ENCODE measurements at regions of chr15 and their contacts with region 1.

Region 1: DNA sequence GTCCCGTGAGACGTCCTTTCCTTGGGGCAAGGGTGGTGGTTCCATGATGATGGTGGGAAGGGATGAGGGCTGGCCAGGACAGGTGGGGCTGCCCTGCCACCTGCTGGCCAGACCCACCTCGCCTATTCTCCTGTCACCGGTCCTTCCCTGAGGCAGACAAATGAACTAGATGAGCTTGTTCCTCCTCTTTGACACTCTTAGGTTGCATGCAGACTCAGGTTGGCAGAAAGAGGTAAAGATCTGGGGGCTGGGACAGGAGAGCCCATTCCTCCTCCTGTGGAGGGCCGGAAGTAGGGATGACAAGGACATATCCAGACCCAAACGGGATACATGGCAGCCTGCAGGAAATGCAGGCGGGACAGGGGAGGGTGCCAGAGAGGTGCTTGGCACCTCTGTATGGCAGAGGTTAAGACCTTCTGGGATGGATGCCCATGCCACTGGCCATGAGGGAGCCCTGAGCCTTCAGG is 38.6 kb downstream of the ACSBG1 start:
- DNase-seq: peak in 1 of 2 donors; percentile 47
- H3K4me3 ChIP-seq: no peak overlapping the region
- H3K27ac ChIP-seq: no peak overlapping the region
- H3K4me1 ChIP-seq: no peaks in the 10 kb centered on the region
- H3K27me3 ChIP-seq: no peaks in the 10 kb centered on the region
- CTCF ChIP-seq: peak; percentile 42 to 81 (median 71)
- POLR2A ChIP-seq: no peak

Region 2: DNA sequence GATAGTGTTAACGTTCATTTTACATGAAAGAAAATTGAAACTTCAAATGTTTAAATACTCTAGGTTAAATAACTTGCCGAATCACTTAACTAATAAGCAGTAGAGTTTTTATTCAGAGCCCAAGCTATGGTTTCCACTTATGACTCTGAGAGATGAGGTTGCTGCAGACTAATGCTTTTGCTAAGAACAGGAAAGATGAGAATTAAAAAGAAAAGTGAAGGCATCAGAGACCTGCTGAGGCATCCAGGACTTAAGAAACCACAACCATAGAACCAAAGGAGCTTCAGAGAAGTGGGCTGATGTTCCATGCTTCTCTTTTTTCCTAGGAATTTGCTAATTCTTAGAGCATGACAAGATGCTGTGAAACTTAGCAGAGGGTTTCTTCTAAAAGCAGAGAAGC is 765.6 kb before region 1 on chr15:
- intact Hi-C with region 1: no loop called
- DNase-seq: no peak
- H3K4me3 ChIP-seq: no peak overlapping the region
- H3K27ac ChIP-seq: no peak overlapping the region
- H3K4me1 ChIP-seq: no peaks in the 10 kb centered on the region
- H3K27me3 ChIP-seq: no peaks in the 10 kb centered on the region
- CTCF ChIP-seq: no peak
- POLR2A ChIP-seq: no peak

Region 3: GRCh38 chr15:78149068-78149804 is 46.5 kb before region 1 on chr15 and contains the start of gene IDH3A:
- intact Hi-C with region 1: loop called (anchors 2 kb)
- DNase-seq: peak; percentile 97 to 100
- H3K4me3 ChIP-seq: peak within 1 kb of the TSS; percentile 73 to 91 (median 85)
- H3K27ac ChIP-seq: peak within 1 kb of the TSS; percentile 79 to 81
- H3K4me1 ChIP-seq: peaks cover 0 to 9% of the 10 kb centered on the region in 2 donors
- H3K27me3 ChIP-seq: no peaks in the 10 kb centered on the region
- CTCF ChIP-seq: peak in 1 of 3 donors; percentile 8
- POLR2A ChIP-seq: peak; percentile 22
- total RNA-seq, gene IDH3A: 44.2 to 63.2 (median 52.0) TPM